RWPE1 (cell line): ENCODE measurements at regions of chr19 and their contacts with region 1.

Region 1: DNA sequence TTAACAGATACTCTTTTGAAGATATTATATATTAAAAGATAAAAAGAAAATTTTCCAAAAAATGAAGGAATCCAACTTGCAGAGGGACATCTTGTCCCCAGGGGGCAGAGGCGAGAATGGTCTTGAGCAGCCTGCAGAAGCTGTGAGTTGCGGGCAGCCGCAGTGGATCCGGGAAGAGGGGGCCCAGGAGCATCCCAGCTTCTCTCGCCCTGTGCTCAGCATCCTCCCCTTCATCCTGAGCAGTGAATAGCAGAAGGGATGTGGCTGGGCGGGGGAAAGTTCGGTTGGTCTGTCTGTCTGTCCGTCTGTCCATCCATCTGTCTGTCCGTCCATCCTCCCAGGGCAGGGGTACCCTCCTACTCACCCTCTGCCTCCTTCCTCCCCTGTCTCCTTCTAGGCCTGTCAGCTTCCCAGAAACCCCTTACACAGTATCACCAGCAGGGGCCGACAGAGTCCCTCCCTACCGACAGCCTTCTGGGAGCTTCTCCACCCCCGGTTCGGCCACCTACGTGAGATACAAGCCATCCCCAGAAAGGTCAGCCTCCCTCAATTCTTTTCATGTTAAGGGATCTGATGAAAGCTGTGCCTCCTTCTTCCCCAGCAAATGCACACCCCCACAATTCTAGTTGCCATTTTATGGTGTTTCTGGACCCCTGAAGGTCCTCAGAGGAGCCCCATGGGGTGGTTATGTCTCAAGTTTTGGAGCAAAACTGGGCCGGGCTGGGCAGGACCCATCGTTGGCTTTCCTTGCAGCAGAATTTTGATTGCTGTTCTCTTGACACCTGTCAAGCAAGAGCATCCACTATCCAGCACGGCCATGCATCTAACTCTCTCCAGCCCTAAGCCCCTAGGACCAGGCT is 81.6 kb downstream of the DPF1 start:
- DNase-seq: peak; percentile 74
- H3K27ac ChIP-seq: peak overlapping the region; percentile 55
- CTCF ChIP-seq: peak; percentile 77

Region 2: GRCh38 chr19:38125238-38125637 is 17.2 kb before region 1 on chr19:
- CTCF ChIA-PET with region 1: interaction called, 12 read pairs
- POLR2A ChIA-PET with region 1: no interaction called
- DNase-seq: no peak
- H3K27ac ChIP-seq: no peak overlapping the region
- CTCF ChIP-seq: no peak

Region 3: DNA sequence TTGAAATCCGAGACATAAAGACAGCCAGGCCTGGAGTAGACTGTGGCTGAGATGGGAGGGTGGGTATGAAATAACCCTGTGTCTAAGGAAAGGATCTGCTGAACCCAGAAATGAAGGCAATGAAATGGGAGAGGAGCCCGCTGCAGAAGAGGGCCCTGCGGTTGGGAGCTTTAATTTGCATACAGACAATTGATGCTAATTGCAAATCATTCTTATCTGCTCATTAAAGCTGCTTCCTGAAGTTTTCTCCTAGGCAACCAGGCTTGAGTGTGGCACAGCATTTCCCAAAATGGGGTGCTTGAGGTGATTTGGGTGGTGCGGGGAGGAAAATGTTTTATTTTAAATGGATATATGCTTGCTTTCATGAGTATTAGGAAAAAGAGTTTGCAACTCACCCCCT is 26.2 kb after region 1 on chr19:
- CTCF ChIA-PET with region 1: no interaction called
- POLR2A ChIA-PET with region 1: no interaction called
- DNase-seq: no peak
- H3K27ac ChIP-seq: peak overlapping the region; percentile 97
- CTCF ChIP-seq: no peak

Region 4: DNA sequence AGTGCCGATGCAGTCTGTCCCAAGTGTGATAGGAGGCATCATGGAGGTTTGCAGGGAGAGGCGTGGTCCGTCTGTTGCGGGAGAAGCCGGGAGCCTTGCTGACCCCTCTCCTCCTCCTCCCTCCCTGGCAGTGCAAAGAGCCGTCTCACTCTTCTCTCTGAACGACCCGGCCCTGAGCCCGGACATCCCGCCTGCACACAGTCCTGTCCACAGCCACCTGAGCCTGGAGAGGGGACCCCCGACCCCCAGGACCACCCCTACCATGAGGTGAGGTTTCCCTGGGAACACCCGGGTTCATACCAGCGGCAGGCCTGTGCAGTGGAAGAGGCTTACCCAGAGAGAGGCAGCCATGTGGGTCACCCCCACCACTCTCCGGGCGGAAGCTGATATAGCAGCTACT is 59.3 kb after region 1 on chr19:
- CTCF ChIA-PET with region 1: no interaction called
- POLR2A ChIA-PET with region 1: no interaction called
- DNase-seq: no peak
- H3K27ac ChIP-seq: peak overlapping the region; percentile 54
- CTCF ChIP-seq: no peak